ENCODE measurements at regions of chr2 and their contacts with region 1.

Region 1: GRCh38 chr2:55168221-55169154 is 63.6 kb downstream of the CLHC1 start:
- DNase-seq: peak in 8 of 9 experiments; percentile 14 to 71 (median 46)
- ATAC-seq: peak; percentile 75
- H3K4me3 ChIP-seq: no peak overlapping the region
- H3K4me3 Mint-ChIP-seq: no peak overlapping the region
- H3K27ac ChIP-seq: no peak overlapping the region
- H3K27ac Mint-ChIP-seq: no peak overlapping the region
- H3K4me1 ChIP-seq: no peaks in the 10 kb centered on the region
- H3K4me1 Mint-ChIP-seq: peaks cover 3% of the 10 kb centered on the region
- H3K27me3 ChIP-seq: no peaks in the 10 kb centered on the region
- H3K27me3 Mint-ChIP-seq: no peaks in the 10 kb centered on the region
- CTCF ChIP-seq: peak; percentile 80

Region 2: GRCh38 chr2:54838585-54839035 is 329.9 kb before region 1 on chr2:
- CTCF ChIA-PET with region 1: interaction called, 7 read pairs
- POLR2A ChIA-PET with region 1: no interaction called
- intact Hi-C with region 1: loop called (anchors 1 to 5 kb)
- DNase-seq: peak; percentile 28 to 75 (median 68)
- ATAC-seq: peak; percentile 80
- H3K4me3 ChIP-seq: no peak overlapping the region
- H3K4me3 Mint-ChIP-seq: no peak overlapping the region
- H3K27ac ChIP-seq: no peak overlapping the region
- H3K27ac Mint-ChIP-seq: no peak overlapping the region
- H3K4me1 ChIP-seq: no peaks in the 10 kb centered on the region
- H3K4me1 Mint-ChIP-seq: no peaks in the 10 kb centered on the region
- H3K27me3 ChIP-seq: no peaks in the 10 kb centered on the region
- H3K27me3 Mint-ChIP-seq: no peaks in the 10 kb centered on the region
- CTCF ChIP-seq: peak; percentile 95

Region 3: GRCh38 chr2:54899576-54900200 is 268.8 kb before region 1 on chr2:
- CTCF ChIA-PET with region 1: interaction called, 32 read pairs
- POLR2A ChIA-PET with region 1: no interaction called
- intact Hi-C with region 1: loop called in 1 of 2 experiments (anchors 1 kb)
- DNase-seq: peak in 2 of 9 experiments; percentile 39 to 51
- ATAC-seq: no peak
- H3K4me3 ChIP-seq: no peak overlapping the region
- H3K4me3 Mint-ChIP-seq: no peak overlapping the region
- H3K27ac ChIP-seq: no peak overlapping the region
- H3K27ac Mint-ChIP-seq: no peak overlapping the region
- H3K4me1 ChIP-seq: peaks cover 11% of the 10 kb centered on the region
- H3K4me1 Mint-ChIP-seq: peaks cover 14% of the 10 kb centered on the region
- H3K27me3 ChIP-seq: no peaks in the 10 kb centered on the region
- H3K27me3 Mint-ChIP-seq: no peaks in the 10 kb centered on the region
- CTCF ChIP-seq: peak; percentile 25

Region 4: GRCh38 chr2:55010149-55010591 is 158.3 kb before region 1 on chr2:
- CTCF ChIA-PET with region 1: interaction called, 106 read pairs
- POLR2A ChIA-PET with region 1: interaction called, 3 read pairs
- intact Hi-C with region 1: loop called (anchors 1 kb)
- DNase-seq: peak; percentile 7 to 79 (median 54)
- ATAC-seq: peak; percentile 95
- H3K4me3 ChIP-seq: peak overlapping the region; percentile 24 to 43
- H3K4me3 Mint-ChIP-seq: peak overlapping the region; percentile 93
- H3K27ac ChIP-seq: peak overlapping the region; percentile 40 to 45
- H3K27ac Mint-ChIP-seq: peak overlapping the region; percentile 95
- H3K4me1 ChIP-seq: peaks cover 61% of the 10 kb centered on the region
- H3K4me1 Mint-ChIP-seq: peaks cover 77% of the 10 kb centered on the region
- H3K27me3 ChIP-seq: no peaks in the 10 kb centered on the region
- H3K27me3 Mint-ChIP-seq: no peaks in the 10 kb centered on the region
- CTCF ChIP-seq: no peak

Region 5: DNA sequence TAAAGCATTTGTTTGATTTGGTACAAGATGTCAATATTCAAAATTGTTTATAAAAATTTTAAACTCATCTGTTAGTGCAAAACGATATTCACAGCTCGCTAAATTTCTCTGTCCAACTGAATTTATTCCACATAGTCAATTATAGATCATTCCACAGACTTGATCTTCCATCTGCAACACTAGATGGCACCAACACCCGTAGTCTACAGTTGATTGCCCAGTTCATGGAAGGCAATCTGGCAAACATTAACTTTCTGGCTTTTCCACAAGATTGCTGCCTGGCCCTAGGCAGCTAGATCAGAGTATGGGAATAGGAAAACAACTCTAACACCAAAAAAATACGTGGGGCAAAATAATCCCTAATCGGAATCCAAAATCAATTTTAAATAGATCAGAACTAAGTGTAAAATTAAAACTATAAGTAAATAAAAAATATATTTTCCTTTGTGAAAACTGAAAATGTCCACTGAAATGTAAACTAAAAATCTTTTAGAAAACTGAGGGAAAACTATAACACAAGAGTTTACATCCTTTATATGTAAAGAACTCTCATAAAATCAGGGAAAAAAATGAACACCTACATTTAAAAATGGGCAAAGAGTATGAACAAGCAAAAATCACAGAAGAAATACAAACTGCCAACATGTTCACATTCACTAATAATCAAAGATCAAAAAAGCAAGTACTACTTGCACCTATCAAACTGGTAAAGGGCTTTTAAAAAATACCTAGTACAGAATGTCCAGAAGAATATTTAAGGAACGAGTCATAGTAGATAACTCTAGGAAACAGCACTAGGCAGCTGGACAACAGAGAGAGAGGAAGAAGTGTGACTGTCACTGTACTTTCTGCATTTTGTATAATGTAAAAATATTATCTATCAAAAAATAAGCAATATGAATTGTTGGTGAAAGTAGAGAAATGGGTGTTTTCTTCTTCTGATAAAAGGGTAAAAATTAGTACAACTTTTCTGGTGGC is 153.2 kb before region 1 on chr2:
- CTCF ChIA-PET with region 1: interaction called, 106 read pairs
- POLR2A ChIA-PET with region 1: interaction called, 4 read pairs
- intact Hi-C with region 1: loop called (anchors 1 kb)
- DNase-seq: peak in 7 of 9 experiments; percentile 22 to 73 (median 41)
- ATAC-seq: peak; percentile 39
- H3K4me3 ChIP-seq: no peak overlapping the region
- H3K4me3 Mint-ChIP-seq: no peak overlapping the region
- H3K27ac ChIP-seq: no peak overlapping the region
- H3K27ac Mint-ChIP-seq: no peak overlapping the region
- H3K4me1 ChIP-seq: peaks cover 28% of the 10 kb centered on the region
- H3K4me1 Mint-ChIP-seq: peaks cover 54% of the 10 kb centered on the region
- H3K27me3 ChIP-seq: no peaks in the 10 kb centered on the region
- H3K27me3 Mint-ChIP-seq: no peaks in the 10 kb centered on the region
- CTCF ChIP-seq: peak; percentile 59

Region 6: DNA sequence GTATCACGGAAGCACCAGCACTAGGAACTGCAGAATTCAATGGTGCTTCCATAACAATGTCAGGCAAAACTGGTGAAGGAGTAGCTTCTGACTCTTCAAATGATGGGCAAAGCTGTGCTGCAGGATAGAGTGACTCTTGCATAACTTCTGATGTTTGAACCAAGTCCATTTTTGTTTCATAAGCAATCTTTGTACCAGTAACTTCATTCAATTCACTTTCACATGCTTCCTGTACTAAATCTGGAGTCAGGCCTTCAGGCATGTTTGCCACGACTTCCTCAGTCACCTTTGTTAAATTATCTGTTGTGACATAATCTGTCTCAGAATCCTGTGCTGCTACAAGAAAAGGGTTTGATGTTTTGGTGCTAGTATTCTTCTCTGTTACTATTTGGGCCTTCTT is 142.3 kb before region 1 on chr2:
- CTCF ChIA-PET with region 1: interaction called, 11 read pairs
- POLR2A ChIA-PET with region 1: no interaction called
- intact Hi-C with region 1: no loop called
- DNase-seq: no peak
- ATAC-seq: peak; percentile 38
- H3K4me3 ChIP-seq: no peak overlapping the region
- H3K4me3 Mint-ChIP-seq: no peak overlapping the region
- H3K27ac ChIP-seq: no peak overlapping the region
- H3K27ac Mint-ChIP-seq: peak overlapping the region; percentile 30
- H3K4me1 ChIP-seq: peaks cover 61% of the 10 kb centered on the region
- H3K4me1 Mint-ChIP-seq: peaks cover 21% of the 10 kb centered on the region
- H3K27me3 ChIP-seq: no peaks in the 10 kb centered on the region
- H3K27me3 Mint-ChIP-seq: no peaks in the 10 kb centered on the region
- CTCF ChIP-seq: no peak

Region 7: DNA sequence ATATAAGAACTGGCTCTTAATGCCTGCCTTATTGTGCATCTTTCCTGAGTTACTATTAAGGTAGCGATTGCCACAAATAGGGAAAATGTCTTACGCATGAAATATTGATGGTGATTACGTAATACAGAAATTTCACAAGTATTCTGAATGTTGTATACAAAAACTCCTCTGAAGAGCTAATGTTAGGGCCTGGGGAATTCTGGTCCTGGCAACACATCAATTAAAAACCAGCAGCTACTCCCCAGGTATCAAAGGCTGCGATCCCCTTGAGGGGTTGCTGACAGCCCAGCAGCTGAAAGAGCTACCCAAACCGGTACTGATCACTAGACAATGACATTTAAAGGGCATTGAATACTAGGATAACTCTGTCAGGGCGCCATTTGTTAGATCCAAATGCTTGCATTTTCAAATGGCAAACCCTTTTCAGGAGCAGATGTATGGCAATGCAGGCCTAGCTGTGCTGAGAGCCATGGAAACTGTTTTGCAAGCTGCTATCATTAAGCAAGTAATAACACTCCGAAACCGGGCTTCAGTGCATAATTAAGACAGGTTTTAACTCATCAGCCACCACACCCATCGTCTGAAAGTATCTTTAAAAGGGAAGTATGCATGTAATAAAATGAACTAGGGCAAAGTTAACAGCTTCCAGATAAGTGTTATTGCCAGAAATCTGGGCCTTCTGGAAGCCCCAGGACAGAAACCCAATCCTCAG is 14.7 kb before region 1 on chr2:
- CTCF ChIA-PET with region 1: interaction called, 13 read pairs
- POLR2A ChIA-PET with region 1: interaction called, 6 read pairs
- intact Hi-C with region 1: no loop called
- DNase-seq: no peak
- ATAC-seq: no peak
- H3K4me3 ChIP-seq: no peak overlapping the region
- H3K4me3 Mint-ChIP-seq: no peak overlapping the region
- H3K27ac ChIP-seq: no peak overlapping the region
- H3K27ac Mint-ChIP-seq: no peak overlapping the region
- H3K4me1 ChIP-seq: no peaks in the 10 kb centered on the region
- H3K4me1 Mint-ChIP-seq: peaks cover 5% of the 10 kb centered on the region
- H3K27me3 ChIP-seq: no peaks in the 10 kb centered on the region
- H3K27me3 Mint-ChIP-seq: no peaks in the 10 kb centered on the region
- CTCF ChIP-seq: no peak

Region 8: GRCh38 chr2:55302241-55302640 is 133.8 kb after region 1 on chr2:
- CTCF ChIA-PET with region 1: no interaction called
- POLR2A ChIA-PET with region 1: no interaction called
- intact Hi-C with region 1: no loop called
- DNase-seq: peak in 2 of 9 experiments; percentile 19 to 50
- ATAC-seq: peak; percentile 23
- H3K4me3 ChIP-seq: no peak overlapping the region
- H3K4me3 Mint-ChIP-seq: no peak overlapping the region
- H3K27ac ChIP-seq: no peak overlapping the region
- H3K27ac Mint-ChIP-seq: no peak overlapping the region
- H3K4me1 ChIP-seq: no peaks in the 10 kb centered on the region
- H3K4me1 Mint-ChIP-seq: peaks cover 3% of the 10 kb centered on the region
- H3K27me3 ChIP-seq: no peaks in the 10 kb centered on the region
- H3K27me3 Mint-ChIP-seq: no peaks in the 10 kb centered on the region
- CTCF ChIP-seq: no peak